Caco-2 (cell line): ENCODE measurements at regions of chr6 and their contacts with region 1.

Region 1: DNA sequence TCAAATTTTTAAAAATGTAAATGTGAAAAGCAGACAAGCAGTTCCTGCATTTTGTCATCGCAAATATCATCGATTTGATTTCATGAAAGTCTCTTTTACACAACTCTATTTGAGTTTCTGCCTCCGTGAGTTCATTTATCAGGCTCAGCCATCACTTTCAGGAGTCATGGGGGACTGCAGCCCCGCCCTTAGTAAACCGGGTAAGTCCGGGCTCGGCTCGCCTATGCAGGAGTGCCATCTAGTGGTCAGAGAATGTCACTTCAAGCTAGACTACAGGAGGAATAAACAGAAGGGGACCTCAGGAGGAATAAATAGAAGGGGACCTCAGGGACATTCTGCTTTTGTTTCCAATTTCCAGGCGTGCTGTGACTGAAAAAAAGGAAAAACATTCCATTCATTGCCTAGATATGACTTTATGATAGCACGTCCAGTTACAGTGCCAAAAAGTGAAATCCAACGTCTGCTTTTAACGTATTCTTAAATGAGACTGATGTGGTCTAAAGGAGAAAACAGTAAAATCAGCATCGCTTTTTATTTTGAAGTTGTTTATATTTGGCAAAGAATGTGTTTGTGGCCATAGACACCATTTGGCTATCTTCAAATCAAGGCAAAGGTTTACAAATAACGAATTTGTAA is 333.9 kb downstream of the HACE1 start:
- DNase-seq: peak; percentile 75 to 82
- H3K4me3 ChIP-seq: peak overlapping the region; percentile 21; the same call in 1 of the 2 replicates
- H3K4me3 Mint-ChIP-seq: peak overlapping the region; percentile 75
- H3K27ac Mint-ChIP-seq: peak overlapping the region; percentile 69
- H3K4me1 ChIP-seq: peaks cover 16% of the 10 kb centered on the region
- H3K4me1 Mint-ChIP-seq: peaks cover 35% of the 10 kb centered on the region
- H3K27me3 ChIP-seq: no peaks in the 10 kb centered on the region
- H3K27me3 Mint-ChIP-seq: no peaks in the 10 kb centered on the region
- CTCF ChIP-seq: peak; percentile 89 to 94

Region 2: DNA sequence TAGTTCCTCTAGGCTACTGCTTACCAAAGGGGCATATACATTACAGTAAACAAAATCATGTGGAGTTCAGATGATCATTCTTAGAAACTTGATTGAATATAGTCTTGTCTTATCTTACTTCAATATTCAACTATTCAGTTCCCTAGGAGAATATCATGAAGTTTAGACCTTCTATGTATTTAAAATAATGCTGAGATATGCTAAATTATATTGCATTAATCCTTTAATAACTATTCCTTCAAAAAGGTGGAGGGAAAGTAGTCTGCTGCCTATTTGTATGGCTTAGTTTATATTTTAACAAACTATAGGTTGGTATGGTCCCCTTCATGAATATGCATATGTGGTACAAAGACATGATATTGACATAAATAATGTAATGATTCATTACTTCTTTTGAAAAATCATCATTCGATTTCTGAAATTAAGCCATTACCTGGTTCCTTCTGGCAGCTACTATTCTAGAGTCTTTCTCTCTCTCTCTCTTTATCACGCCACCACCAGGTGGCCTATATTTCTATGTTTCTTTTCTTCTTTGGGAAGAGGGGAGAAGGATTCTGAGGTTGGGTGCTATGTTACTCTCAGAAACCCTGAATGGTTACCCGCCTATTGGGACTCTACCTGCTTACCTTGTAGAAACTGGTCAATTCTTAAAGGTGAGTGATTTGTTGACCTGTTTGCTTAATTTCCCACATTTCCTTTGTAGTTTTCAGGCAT is 521.8 kb before region 1 on chr6:
- CTCF ChIA-PET with region 1: no interaction called
- POLR2A ChIA-PET with region 1: interaction called, 4 read pairs
- intact Hi-C with region 1: loop called (anchors 1 kb)
- DNase-seq: no peak
- H3K4me3 ChIP-seq: no peak overlapping the region
- H3K4me3 Mint-ChIP-seq: no peak overlapping the region
- H3K27ac Mint-ChIP-seq: no peak overlapping the region
- H3K4me1 ChIP-seq: no peaks in the 10 kb centered on the region
- H3K4me1 Mint-ChIP-seq: no peaks in the 10 kb centered on the region
- H3K27me3 ChIP-seq: no peaks in the 10 kb centered on the region
- H3K27me3 Mint-ChIP-seq: no peaks in the 10 kb centered on the region
- CTCF ChIP-seq: peak in 1 of 2 experiments; percentile 21

Region 3: GRCh38 chr6:104325341-104326172 is 200.2 kb before region 1 on chr6:
- CTCF ChIA-PET with region 1: interaction called, 4 read pairs
- POLR2A ChIA-PET with region 1: no interaction called
- intact Hi-C with region 1: loop called (anchors 1 kb)
- DNase-seq: peak in 1 of 2 experiments; percentile 56
- H3K4me3 ChIP-seq: no peak overlapping the region
- H3K4me3 Mint-ChIP-seq: no peak overlapping the region
- H3K27ac Mint-ChIP-seq: peak overlapping the region; percentile 35
- H3K4me1 ChIP-seq: peaks cover 4% of the 10 kb centered on the region; the same call in 1 of the 2 replicates
- H3K4me1 Mint-ChIP-seq: peaks cover 14% of the 10 kb centered on the region
- H3K27me3 ChIP-seq: no peaks in the 10 kb centered on the region
- H3K27me3 Mint-ChIP-seq: no peaks in the 10 kb centered on the region
- CTCF ChIP-seq: peak; percentile 70 to 73

Region 4: GRCh38 chr6:104404377-104404776 is 121.4 kb before region 1 on chr6:
- CTCF ChIA-PET with region 1: no interaction called
- POLR2A ChIA-PET with region 1: no interaction called
- intact Hi-C with region 1: loop called (anchors 10 kb)
- DNase-seq: no peak
- H3K4me3 ChIP-seq: no peak overlapping the region
- H3K4me3 Mint-ChIP-seq: no peak overlapping the region
- H3K27ac Mint-ChIP-seq: no peak overlapping the region
- H3K4me1 ChIP-seq: no peaks in the 10 kb centered on the region
- H3K4me1 Mint-ChIP-seq: no peaks in the 10 kb centered on the region
- H3K27me3 ChIP-seq: no peaks in the 10 kb centered on the region
- H3K27me3 Mint-ChIP-seq: no peaks in the 10 kb centered on the region
- CTCF ChIP-seq: no peak

Region 5: GRCh38 chr6:104771258-104771832 is 245.6 kb after region 1 on chr6:
- CTCF ChIA-PET with region 1: no interaction called
- POLR2A ChIA-PET with region 1: no interaction called
- intact Hi-C with region 1: loop called (anchors 1 kb)
- DNase-seq: no peak
- H3K4me3 ChIP-seq: no peak overlapping the region
- H3K4me3 Mint-ChIP-seq: no peak overlapping the region
- H3K27ac Mint-ChIP-seq: no peak overlapping the region
- H3K4me1 ChIP-seq: no peaks in the 10 kb centered on the region
- H3K4me1 Mint-ChIP-seq: no peaks in the 10 kb centered on the region
- H3K27me3 ChIP-seq: no peaks in the 10 kb centered on the region
- H3K27me3 Mint-ChIP-seq: no peaks in the 10 kb centered on the region
- CTCF ChIP-seq: peak; percentile 34 to 52

Region 6: DNA sequence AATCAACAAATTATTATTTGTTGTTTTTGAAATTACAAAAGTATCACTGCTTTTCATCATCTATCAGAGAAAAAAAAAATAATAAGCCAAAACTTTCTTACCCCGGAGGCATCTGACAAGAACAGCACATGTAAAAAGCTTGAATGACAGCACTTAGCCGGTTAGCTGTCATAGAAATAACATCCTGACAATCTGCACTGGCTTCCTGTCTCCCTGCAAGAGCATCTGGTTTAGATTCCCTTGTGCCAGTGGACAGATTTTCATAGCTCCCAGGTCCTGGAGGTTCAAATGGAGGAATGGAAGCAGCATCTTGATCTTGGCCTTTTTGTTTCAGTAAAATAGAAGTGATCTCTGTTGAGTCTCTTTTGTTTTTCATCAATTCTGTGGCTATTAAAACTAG is 259.1 kb after region 1 on chr6:
- CTCF ChIA-PET with region 1: no interaction called
- POLR2A ChIA-PET with region 1: no interaction called
- intact Hi-C with region 1: no loop called
- DNase-seq: no peak
- H3K4me3 ChIP-seq: no peak overlapping the region
- H3K4me3 Mint-ChIP-seq: no peak overlapping the region
- H3K27ac Mint-ChIP-seq: no peak overlapping the region
- H3K4me1 ChIP-seq: peaks cover 7% of the 10 kb centered on the region; the same call in 1 of the 2 replicates
- H3K4me1 Mint-ChIP-seq: peaks cover 24% of the 10 kb centered on the region
- H3K27me3 ChIP-seq: no peaks in the 10 kb centered on the region
- H3K27me3 Mint-ChIP-seq: no peaks in the 10 kb centered on the region
- CTCF ChIP-seq: no peak